ENCODE measurements at regions of chr18 and their contacts with region 1.

Region 1: GRCh38 chr18:40708726-40709125 is 1246.3 kb upstream of the PIK3C3 start:
- DNase-seq: no peak
- ATAC-seq: no peak
- H3K4me3 ChIP-seq: no peak overlapping the region
- H3K27ac ChIP-seq: no peak overlapping the region
- H3K4me1 ChIP-seq: no peaks in the 10 kb centered on the region
- H3K27me3 ChIP-seq: no peaks in the 10 kb centered on the region
- CTCF ChIP-seq: no peak

Region 2: GRCh38 chr18:40447820-40448219 is 260.9 kb before region 1 on chr18:
- intact Hi-C with region 1: no loop called
- DNase-seq: no peak
- ATAC-seq: no peak
- H3K4me3 ChIP-seq: no peak overlapping the region
- H3K27ac ChIP-seq: no peak overlapping the region
- H3K4me1 ChIP-seq: no peaks in the 10 kb centered on the region
- H3K27me3 ChIP-seq: no peaks in the 10 kb centered on the region
- CTCF ChIP-seq: no peak

Region 3: DNA sequence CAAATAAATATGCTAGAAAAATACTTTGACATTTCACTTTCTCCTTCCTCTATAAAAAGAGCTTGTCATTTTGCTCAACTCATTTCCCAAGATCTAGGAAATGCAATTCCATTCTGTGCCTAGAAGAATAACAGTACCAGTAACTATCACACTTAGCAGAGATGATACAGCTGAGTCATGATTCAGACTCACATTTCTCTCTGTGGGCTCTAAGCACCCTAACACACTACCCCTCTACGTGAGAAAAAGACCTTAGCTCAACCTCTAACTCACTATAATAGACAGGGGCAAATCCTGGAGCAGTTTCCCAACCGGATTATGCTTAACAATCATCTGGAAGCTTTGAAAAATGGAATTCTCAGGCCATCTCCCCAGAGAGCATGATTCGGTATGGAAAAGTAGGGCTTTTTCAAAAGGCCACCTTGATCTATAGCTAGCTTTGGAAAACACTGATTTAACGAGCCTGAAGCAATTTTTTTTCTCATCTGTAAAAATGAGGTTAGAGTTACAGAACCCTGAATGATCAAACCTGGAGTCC is 66.0 kb before region 1 on chr18:
- intact Hi-C with region 1: loop called (anchors 10 kb)
- DNase-seq: no peak
- ATAC-seq: no peak
- H3K4me3 ChIP-seq: no peak overlapping the region
- H3K27ac ChIP-seq: no peak overlapping the region
- H3K4me1 ChIP-seq: no peaks in the 10 kb centered on the region
- H3K27me3 ChIP-seq: no peaks in the 10 kb centered on the region
- CTCF ChIP-seq: no peak